Activated CD4-positive, alpha-beta T cell treated with anti-CD3 and anti-CD28 coated beads for 36 hours (primary cell): ENCODE measurements at regions of chr17 and their contacts with region 1.

Region 1: GRCh38 chr17:74457146-74457819 is 9.2 kb upstream of the CD300A start:
- DNase-seq: peak; percentile 83
- ATAC-seq: peak; percentile 49
- H3K4me3 Mint-ChIP-seq: no peak overlapping the region
- H3K27ac Mint-ChIP-seq: no peak overlapping the region
- H3K4me1 Mint-ChIP-seq: peaks cover 9% of the 10 kb centered on the region
- H3K27me3 Mint-ChIP-seq: peaks cover 6% of the 10 kb centered on the region

Region 2: DNA sequence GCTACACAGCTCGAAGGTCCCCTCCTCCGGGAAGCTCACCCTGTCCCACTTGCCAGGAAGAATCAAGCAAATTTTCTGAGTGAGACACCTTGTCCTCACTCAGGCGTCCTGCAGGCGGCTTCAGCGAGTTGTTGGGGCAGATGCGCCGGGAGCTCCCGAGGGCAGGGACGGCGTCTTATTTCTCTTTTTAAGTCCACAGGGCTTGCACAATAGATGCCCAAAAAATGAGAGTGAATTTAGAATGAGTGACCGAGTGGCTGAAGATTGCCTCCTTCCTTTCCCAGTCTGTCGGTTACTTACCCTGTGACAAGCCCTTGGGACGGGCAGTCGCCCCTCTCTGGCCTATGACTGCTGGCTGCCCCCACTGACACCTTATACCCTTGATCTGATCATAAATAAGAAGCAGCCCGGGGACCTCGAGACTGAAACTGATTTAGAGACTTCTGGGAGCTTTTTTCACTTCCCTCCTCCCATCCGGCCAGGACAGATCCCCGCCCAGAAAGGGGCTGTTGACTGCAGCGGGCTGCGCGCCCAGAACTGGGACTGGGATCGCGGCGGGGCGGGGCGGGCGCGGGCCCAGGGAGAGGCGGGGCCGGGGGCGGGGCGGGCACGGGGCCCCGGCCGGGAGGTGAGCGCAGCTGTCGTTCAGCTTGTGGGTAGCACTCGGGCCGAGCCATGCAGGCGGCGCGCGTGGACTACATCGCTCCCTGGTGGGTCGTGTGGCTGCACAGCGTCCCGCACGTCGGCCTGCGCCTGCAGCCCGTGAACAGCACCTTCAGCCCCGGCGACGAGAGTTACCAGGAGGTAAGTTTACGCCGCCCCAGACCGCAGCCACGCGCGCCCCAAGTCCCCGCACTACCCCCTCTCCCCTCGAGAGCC is 244.1 kb before region 1 on chr17 and contains the start of gene TTYH2:
- CTCF ChIA-PET with region 1: no interaction called
- POLR2A ChIA-PET with region 1: no interaction called
- intact Hi-C with region 1: loop called in 1 of 2 experiments (anchors 5 kb)
- DNase-seq: peak; percentile 82
- ATAC-seq: peak; percentile 62
- H3K4me3 Mint-ChIP-seq: peak within 1 kb of the TSS; percentile 74
- H3K27ac Mint-ChIP-seq: peak within 1 kb of the TSS; percentile 75
- H3K4me1 Mint-ChIP-seq: peaks cover 61% of the 10 kb centered on the region
- H3K27me3 Mint-ChIP-seq: no peaks in the 10 kb centered on the region
- total RNA-seq, gene TTYH2: 2.7 to 3.4 TPM

Region 3: DNA sequence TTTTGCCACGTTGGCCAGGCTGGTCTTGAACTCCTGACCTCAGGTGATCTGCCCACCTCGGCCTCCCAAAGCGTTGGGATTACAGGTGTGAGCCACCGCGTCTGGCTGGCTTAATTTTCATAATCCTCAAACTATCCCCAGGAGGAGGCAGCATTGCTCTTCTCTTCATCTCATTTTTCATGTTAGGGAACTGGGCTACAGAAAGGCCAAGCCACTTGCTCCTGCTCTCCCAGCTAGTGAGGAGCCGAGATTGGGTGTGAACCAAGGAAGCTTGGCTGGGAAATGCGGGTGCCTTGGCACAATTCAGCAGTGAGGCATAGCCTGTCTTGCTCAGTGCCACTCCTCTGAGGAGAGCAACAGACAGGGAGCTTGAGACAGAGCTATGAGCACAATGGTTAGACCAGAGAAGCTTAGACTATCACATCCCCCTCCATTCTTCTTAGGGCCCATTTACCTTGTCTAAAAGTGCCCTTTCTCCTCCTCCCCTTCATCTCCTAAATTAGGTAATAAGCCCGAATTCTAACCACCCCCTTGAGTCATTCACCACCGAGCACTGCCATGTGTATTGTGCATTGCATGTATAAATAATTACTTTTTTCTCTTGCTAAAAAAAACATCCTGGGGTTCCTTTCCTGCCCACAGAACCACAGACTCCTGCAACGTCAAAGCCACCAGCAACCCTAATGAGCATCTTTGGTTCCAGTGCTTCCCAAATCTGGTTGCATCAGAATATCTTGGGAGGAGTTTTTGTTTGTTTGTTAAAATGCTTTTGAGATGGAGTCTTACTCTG is 151.2 kb before region 1 on chr17:
- CTCF ChIA-PET with region 1: interaction called, 5 read pairs
- POLR2A ChIA-PET with region 1: no interaction called
- intact Hi-C with region 1: loop called (anchors 1 to 10 kb)
- DNase-seq: no peak
- ATAC-seq: peak; percentile 49
- H3K4me3 Mint-ChIP-seq: no peak overlapping the region
- H3K27ac Mint-ChIP-seq: no peak overlapping the region
- H3K4me1 Mint-ChIP-seq: peaks cover 7% of the 10 kb centered on the region
- H3K27me3 Mint-ChIP-seq: no peaks in the 10 kb centered on the region

Region 4: GRCh38 chr17:74379495-74380085 is 77.7 kb before region 1 on chr17:
- CTCF ChIA-PET with region 1: interaction called, 93 read pairs
- POLR2A ChIA-PET with region 1: no interaction called
- intact Hi-C with region 1: loop called (anchors 1 kb)
- DNase-seq: peak; percentile 97
- ATAC-seq: peak; percentile 97
- H3K4me3 Mint-ChIP-seq: no peak overlapping the region
- H3K27ac Mint-ChIP-seq: no peak overlapping the region
- H3K4me1 Mint-ChIP-seq: no peaks in the 10 kb centered on the region
- H3K27me3 Mint-ChIP-seq: no peaks in the 10 kb centered on the region

Region 5: GRCh38 chr17:74437702-74438101 is 19.6 kb before region 1 on chr17:
- CTCF ChIA-PET with region 1: interaction called, 21 read pairs
- POLR2A ChIA-PET with region 1: interaction called, 7 read pairs
- intact Hi-C with region 1: loop called in 1 of 2 experiments (anchors 1 kb)
- DNase-seq: no peak
- ATAC-seq: no peak
- H3K4me3 Mint-ChIP-seq: no peak overlapping the region
- H3K27ac Mint-ChIP-seq: no peak overlapping the region
- H3K4me1 Mint-ChIP-seq: no peaks in the 10 kb centered on the region
- H3K27me3 Mint-ChIP-seq: peaks cover 18% of the 10 kb centered on the region

Region 6: DNA sequence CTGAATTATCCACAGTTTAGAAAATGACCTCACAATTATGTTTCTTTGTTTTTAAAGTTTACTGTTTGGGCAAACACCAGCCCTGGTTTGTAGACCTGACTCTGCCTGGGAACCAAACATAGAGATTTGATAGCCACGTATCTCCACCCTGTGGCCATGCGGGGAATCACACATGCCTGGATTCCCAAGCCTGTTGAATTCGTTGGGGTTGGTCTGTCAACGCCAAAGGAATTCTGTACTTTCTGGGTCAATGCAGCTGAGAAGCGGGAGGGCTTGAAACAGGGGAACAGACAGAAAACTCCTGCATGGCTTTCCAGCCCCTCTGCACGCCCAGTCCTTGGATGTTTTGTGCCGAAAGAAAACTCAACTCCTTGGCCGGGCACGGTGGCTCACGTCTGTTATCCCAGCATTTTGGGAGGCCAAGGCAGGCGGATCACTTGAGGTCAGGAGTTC is 36.1 kb after region 1 on chr17:
- CTCF ChIA-PET with region 1: interaction called, 9 read pairs
- POLR2A ChIA-PET with region 1: no interaction called
- intact Hi-C with region 1: loop called (anchors 1 to 2 kb)
- DNase-seq: peak; percentile 80
- ATAC-seq: peak; percentile 78
- H3K4me3 Mint-ChIP-seq: no peak overlapping the region
- H3K27ac Mint-ChIP-seq: no peak overlapping the region
- H3K4me1 Mint-ChIP-seq: no peaks in the 10 kb centered on the region
- H3K27me3 Mint-ChIP-seq: no peaks in the 10 kb centered on the region

Region 7: GRCh38 chr17:74547736-74548135 is 90.5 kb after region 1 on chr17:
- CTCF ChIA-PET with region 1: no interaction called
- POLR2A ChIA-PET with region 1: no interaction called
- intact Hi-C with region 1: no loop called
- DNase-seq: peak; percentile 53
- ATAC-seq: peak; percentile 85
- H3K4me3 Mint-ChIP-seq: no peak overlapping the region
- H3K27ac Mint-ChIP-seq: peak overlapping the region; percentile 71
- H3K4me1 Mint-ChIP-seq: peaks cover 9% of the 10 kb centered on the region
- H3K27me3 Mint-ChIP-seq: no peaks in the 10 kb centered on the region